IMR-90 (cell line): ENCODE measurements at regions of chr2 and their contacts with region 1.

Region 1: GRCh38 chr2:176018708-176019107 is 16.6 kb upstream of the LNPK start:
- DNase-seq: no peak
- ATAC-seq: no peak
- H3K4me3 ChIP-seq: no peak overlapping the region
- H3K27ac ChIP-seq: no peak overlapping the region
- H3K4me1 ChIP-seq: no peaks in the 10 kb centered on the region
- H3K27me3 ChIP-seq: no peaks in the 10 kb centered on the region
- CTCF ChIP-seq: no peak
- POLR2A ChIP-seq: no peak
- RAD21 ChIP-seq: no peak

Region 2: GRCh38 chr2:176063958-176064357 is 45.2 kb after region 1 on chr2:
- CTCF ChIA-PET with region 1: no interaction called
- POLR2A ChIA-PET with region 1: no interaction called
- dilution Hi-C with region 1: no loop called
- in situ Hi-C with region 1: no loop called
- intact Hi-C with region 1: no loop called
- DNase-seq: no peak
- ATAC-seq: no peak
- H3K4me3 ChIP-seq: no peak overlapping the region
- H3K27ac ChIP-seq: no peak overlapping the region
- H3K4me1 ChIP-seq: no peaks in the 10 kb centered on the region
- H3K27me3 ChIP-seq: peaks cover 32% of the 10 kb centered on the region
- CTCF ChIP-seq: no peak
- POLR2A ChIP-seq: no peak
- RAD21 ChIP-seq: no peak

Region 3: DNA sequence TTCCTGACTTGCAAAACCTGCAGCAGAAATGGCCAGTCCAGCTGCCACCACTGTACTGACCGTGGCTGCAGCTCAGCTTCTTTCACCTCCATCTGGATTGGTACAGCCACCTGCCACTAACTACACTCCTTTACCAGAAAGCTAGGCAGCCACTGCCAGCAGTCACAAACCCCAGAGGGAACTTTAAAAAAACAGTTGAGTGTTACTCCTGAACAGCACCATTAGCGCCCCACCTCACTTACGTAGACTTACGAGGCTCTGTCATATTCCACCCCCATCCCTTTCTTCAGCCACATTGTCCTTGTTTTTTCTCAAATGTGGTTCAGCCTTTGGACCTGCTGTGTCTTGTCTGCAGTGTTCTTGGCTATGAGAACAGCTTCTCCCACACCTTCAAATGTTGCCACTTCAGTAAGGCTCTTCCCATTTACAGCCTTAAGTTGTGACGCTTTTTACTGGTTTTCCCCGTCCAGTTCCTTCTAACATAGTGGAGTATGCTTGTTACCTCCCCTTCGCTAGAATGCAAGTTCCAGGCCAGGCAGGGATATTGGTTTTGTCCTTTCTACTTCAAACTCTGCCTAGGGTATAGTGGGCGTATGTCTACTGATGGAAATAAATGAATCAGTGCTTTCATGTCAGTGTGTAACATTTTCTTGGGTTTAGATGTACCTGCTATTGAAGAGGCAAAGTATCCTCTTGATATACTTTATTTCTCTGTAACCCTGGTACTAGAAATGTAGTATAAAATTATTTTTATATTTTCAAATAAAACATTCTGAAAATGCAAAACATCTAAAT is 1210.9 kb after region 1 on chr2:
- CTCF ChIA-PET with region 1: no interaction called
- POLR2A ChIA-PET with region 1: interaction called, 23 read pairs
- dilution Hi-C with region 1: no loop called
- in situ Hi-C with region 1: no loop called
- intact Hi-C with region 1: no loop called
- DNase-seq: no peak
- ATAC-seq: no peak
- H3K4me3 ChIP-seq: no peak overlapping the region
- H3K27ac ChIP-seq: peak overlapping the region; percentile 14; the same call in 1 of the 2 replicates
- H3K4me1 ChIP-seq: peaks cover 8% of the 10 kb centered on the region; the same call in 1 of the 2 replicates
- H3K27me3 ChIP-seq: no peaks in the 10 kb centered on the region
- CTCF ChIP-seq: no peak
- POLR2A ChIP-seq: no peak; the same call in 1 of the 2 replicates
- RAD21 ChIP-seq: no peak